GM12878 (cell line): ENCODE measurements at regions of chr19 and their contacts with region 1.

Region 1: GRCh38 chr19:10388957-10389356 is 8.6 kb upstream of the TYK2 start:
- DNase-seq: peak; percentile 69
- ATAC-seq: peak; percentile 53
- H3K4me3 ChIP-seq: no peak overlapping the region
- H3K27ac ChIP-seq: no peak overlapping the region
- H3K4me1 ChIP-seq: peaks cover 10% of the 10 kb centered on the region
- H3K27me3 ChIP-seq: no peaks in the 10 kb centered on the region
- CTCF ChIP-seq: peak; percentile 88 to 95 (median 92)
- EP300 ChIP-seq: no peak
- POLR2A ChIP-seq: peak; percentile 46; the same call in 1 of the 2 replicates
- RAD21 ChIP-seq: peak; percentile 84

Region 2: GRCh38 chr19:10259162-10259905 is 129.6 kb before region 1 on chr19:
- CTCF ChIA-PET with region 1: interaction called, 370 read pairs
- POLR2A ChIA-PET with region 1: interaction called, 24 read pairs
- RAD21 ChIA-PET with region 1: interaction called, 107 read pairs
- SMC1A ChIA-PET with region 1: interaction called, 83 read pairs
- in situ Hi-C with region 1: no loop called
- intact Hi-C with region 1: loop called (anchors 1 kb)
- DNase-seq: no peak
- ATAC-seq: peak; percentile 91
- H3K4me3 ChIP-seq: no peak overlapping the region
- H3K27ac ChIP-seq: 0 out of 2 replicates have a peak overlapping the region, but pooled peaks have one; percentile 27
- H3K4me1 ChIP-seq: peaks cover 11% of the 10 kb centered on the region
- H3K27me3 ChIP-seq: no peaks in the 10 kb centered on the region
- CTCF ChIP-seq: peak; percentile 71 to 75 (median 73)
- EP300 ChIP-seq: no peak
- POLR2A ChIP-seq: peak; percentile 72
- RAD21 ChIP-seq: peak; percentile 74

Region 3: GRCh38 chr19:10274589-10274988 is 114.4 kb before region 1 on chr19:
- CTCF ChIA-PET with region 1: interaction called, 370 read pairs
- POLR2A ChIA-PET with region 1: interaction called, 108 read pairs
- RAD21 ChIA-PET with region 1: interaction called, 206 read pairs
- SMC1A ChIA-PET with region 1: interaction called, 158 read pairs
- in situ Hi-C with region 1: loop called (anchors 5 kb)
- intact Hi-C with region 1: loop called (anchors 1 kb)
- DNase-seq: no peak
- ATAC-seq: no peak
- H3K4me3 ChIP-seq: peak overlapping the region; percentile 57
- H3K27ac ChIP-seq: 0 out of 2 replicates have a peak overlapping the region, but pooled peaks have one; percentile 4
- H3K4me1 ChIP-seq: no peaks in the 10 kb centered on the region; the same call in 1 of the 2 replicates
- H3K27me3 ChIP-seq: no peaks in the 10 kb centered on the region
- CTCF ChIP-seq: no peak
- EP300 ChIP-seq: no peak
- POLR2A ChIP-seq: no peak
- RAD21 ChIP-seq: no peak

Region 4: GRCh38 chr19:10279737-10280442 is 109.1 kb before region 1 on chr19:
- CTCF ChIA-PET with region 1: interaction called, 370 read pairs
- POLR2A ChIA-PET with region 1: interaction called, 3 read pairs
- RAD21 ChIA-PET with region 1: interaction called, 4 read pairs
- SMC1A ChIA-PET with region 1: interaction called, 15 read pairs
- in situ Hi-C with region 1: no loop called
- intact Hi-C with region 1: no loop called
- DNase-seq: no peak
- ATAC-seq: peak; percentile 30
- H3K4me3 ChIP-seq: peak overlapping the region; percentile 47; the same call in 1 of the 2 replicates
- H3K27ac ChIP-seq: no peak overlapping the region
- H3K4me1 ChIP-seq: peaks cover 11% of the 10 kb centered on the region
- H3K27me3 ChIP-seq: no peaks in the 10 kb centered on the region
- CTCF ChIP-seq: no peak
- EP300 ChIP-seq: no peak
- POLR2A ChIP-seq: peak; percentile 32; the same call in 1 of the 2 replicates
- RAD21 ChIP-seq: no peak

Region 5: DNA sequence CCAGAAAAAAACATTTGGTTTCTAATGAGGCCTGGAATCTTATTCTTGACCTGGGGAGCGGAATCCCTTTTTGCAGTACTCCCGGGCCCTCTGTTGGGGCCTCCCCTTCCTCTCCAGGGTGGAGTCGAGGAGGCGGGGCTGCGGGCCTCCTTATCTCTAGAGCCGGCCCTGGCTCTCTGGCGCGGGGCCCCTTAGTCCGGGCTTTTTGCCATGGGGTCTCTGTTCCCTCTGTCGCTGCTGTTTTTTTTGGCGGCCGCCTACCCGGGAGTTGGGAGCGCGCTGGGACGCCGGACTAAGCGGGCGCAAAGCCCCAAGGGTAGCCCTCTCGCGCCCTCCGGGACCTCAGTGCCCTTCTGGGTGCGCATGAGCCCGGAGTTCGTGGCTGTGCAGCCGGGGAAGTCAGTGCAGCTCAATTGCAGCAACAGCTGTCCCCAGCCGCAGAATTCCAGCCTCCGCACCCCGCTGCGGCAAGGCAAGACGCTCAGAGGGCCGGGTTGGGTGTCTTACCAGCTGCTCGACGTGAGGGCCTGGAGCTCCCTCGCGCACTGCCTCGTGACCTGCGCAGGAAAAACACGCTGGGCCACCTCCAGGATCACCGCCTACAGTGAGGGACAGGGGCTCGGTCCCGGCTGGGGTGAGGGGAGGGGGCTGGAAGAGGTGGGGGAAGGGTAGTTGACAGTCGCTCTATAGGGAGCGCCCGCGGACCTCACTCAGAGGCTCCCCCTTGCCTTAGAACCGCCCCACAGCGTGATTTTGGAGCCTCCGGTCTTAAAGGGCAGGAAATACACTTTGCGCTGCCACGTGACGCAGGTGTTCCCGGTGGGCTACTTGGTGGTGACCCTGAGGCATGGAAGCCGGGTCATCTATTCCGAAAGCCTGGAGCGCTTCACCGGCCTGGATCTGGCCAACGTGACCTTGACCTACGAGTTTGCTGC is 101.9 kb before region 1 on chr19 and contains the start of gene ICAM4:
- CTCF ChIA-PET with region 1: interaction called, 72 read pairs
- POLR2A ChIA-PET with region 1: interaction called, 4 read pairs
- RAD21 ChIA-PET with region 1: interaction called, 24 read pairs
- SMC1A ChIA-PET with region 1: interaction called, 16 read pairs
- in situ Hi-C with region 1: no loop called
- intact Hi-C with region 1: no loop called
- DNase-seq: no peak
- ATAC-seq: peak; percentile 54
- H3K4me3 ChIP-seq: no peak within 1 kb of the TSS; the same call in 1 of the 2 replicates
- H3K27ac ChIP-seq: peak within 1 kb of the TSS; percentile 10
- H3K4me1 ChIP-seq: peaks cover 68% of the 10 kb centered on the region
- H3K27me3 ChIP-seq: peaks cover 1 to 8% of the 10 kb centered on the region in 2 experiments
- CTCF ChIP-seq: no peak
- EP300 ChIP-seq: no peak
- POLR2A ChIP-seq: peak; percentile 80
- RAD21 ChIP-seq: no peak
- polyA plus RNA-seq, gene ICAM4: 0.69 to 0.72 TPM

Region 6: DNA sequence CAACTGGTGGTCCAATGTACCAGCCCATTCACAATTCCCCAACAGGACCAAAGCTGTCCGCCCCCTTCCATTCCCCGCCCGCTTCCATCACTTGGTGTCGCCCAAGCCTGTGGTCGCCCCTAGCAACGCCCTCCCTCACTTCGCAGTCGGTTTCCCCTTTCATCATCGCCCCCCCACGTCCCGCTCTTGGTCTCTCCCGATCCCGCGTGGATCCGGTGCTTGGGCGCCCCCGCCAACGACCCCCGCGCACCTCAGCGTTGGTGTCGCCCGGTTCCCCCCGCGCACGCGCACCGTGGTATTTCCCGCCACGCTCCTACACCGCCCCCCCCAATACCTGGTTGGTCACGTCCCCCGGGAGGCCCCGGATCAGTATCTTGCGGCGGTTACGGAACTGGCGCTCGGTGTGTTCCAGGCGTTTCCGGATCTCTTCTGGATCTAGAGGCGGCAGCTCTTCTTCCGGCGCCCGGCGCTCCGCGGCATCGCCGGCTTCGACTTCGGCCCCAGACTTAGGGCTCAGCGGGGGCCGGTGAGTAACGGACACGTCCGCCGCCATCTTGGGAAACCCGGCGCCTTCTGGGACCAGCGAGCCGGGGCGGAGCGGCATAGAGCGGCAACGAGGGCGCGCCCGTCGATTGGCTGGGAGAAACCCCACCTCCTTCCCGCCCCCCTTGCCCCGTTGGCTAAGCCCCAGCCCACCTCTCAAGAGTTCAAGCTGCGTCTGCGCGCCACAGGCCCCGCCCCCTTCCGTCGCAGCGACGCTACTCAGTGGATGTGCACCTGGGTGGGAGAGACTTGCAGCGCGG is 55.8 kb before region 1 on chr19 and contains the start of gene RAVER1:
- CTCF ChIA-PET with region 1: interaction called, 15 read pairs
- POLR2A ChIA-PET with region 1: no interaction called
- RAD21 ChIA-PET with region 1: interaction called, 9 read pairs
- SMC1A ChIA-PET with region 1: interaction called, 11 read pairs
- in situ Hi-C with region 1: no loop called
- intact Hi-C with region 1: loop called (anchors 5 kb)
- DNase-seq: peak; percentile 87
- ATAC-seq: peak; percentile 98
- H3K4me3 ChIP-seq: peak within 1 kb of the TSS; percentile 100
- H3K27ac ChIP-seq: peak within 1 kb of the TSS; percentile 92
- H3K4me1 ChIP-seq: peaks cover 16% of the 10 kb centered on the region
- H3K27me3 ChIP-seq: no peaks in the 10 kb centered on the region
- CTCF ChIP-seq: no peak
- EP300 ChIP-seq: peak; percentile 10 to 28; a peak in 1 of 4 replicates
- POLR2A ChIP-seq: peak; percentile 96
- RAD21 ChIP-seq: no peak
- polyA plus RNA-seq, gene RAVER1: 0.03 to 0.05 TPM

Region 7: DNA sequence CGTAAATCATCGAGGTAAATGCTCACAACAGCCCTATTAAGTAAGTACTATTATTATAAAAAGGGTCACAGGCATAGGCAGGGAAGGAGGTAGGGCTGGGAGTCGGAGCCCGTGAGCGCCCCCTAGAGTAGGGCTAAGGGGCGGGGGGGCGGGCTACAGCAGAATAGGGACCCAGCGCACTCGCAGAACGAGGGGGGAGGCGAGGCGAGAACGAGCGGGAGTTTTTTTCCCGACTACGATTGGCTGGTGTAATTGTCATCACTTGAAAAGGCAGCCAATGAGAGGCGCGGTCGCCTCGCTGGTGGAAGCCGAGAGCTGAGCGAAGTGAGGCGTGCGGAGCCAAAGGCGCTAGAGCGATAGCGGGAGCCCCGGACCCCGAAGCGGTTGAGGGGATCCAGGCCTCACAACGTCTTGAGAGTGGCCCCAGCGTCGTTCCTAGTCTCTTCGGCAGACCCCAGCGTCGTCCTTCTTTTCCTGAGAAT is 90.0 kb after region 1 on chr19:
- CTCF ChIA-PET with region 1: no interaction called
- POLR2A ChIA-PET with region 1: no interaction called
- RAD21 ChIA-PET with region 1: no interaction called
- SMC1A ChIA-PET with region 1: no interaction called
- in situ Hi-C with region 1: no loop called
- intact Hi-C with region 1: no loop called
- DNase-seq: no peak
- ATAC-seq: peak; percentile 70
- H3K4me3 ChIP-seq: no peak overlapping the region
- H3K27ac ChIP-seq: no peak overlapping the region
- H3K4me1 ChIP-seq: no peaks in the 10 kb centered on the region
- H3K27me3 ChIP-seq: no peaks in the 10 kb centered on the region; a peak in 1 of 4 replicates
- CTCF ChIP-seq: peak; percentile 16 to 56 (median 27); a peak in 5 of 6 replicates
- EP300 ChIP-seq: no peak
- POLR2A ChIP-seq: no peak
- RAD21 ChIP-seq: peak; percentile 10; the same call in 1 of the 2 replicates

Region 8: GRCh38 chr19:10612491-10613119 is 223.6 kb after region 1 on chr19:
- CTCF ChIA-PET with region 1: no interaction called
- POLR2A ChIA-PET with region 1: no interaction called
- RAD21 ChIA-PET with region 1: no interaction called
- SMC1A ChIA-PET with region 1: no interaction called
- in situ Hi-C with region 1: no loop called
- intact Hi-C with region 1: no loop called
- DNase-seq: no peak
- ATAC-seq: no peak
- H3K4me3 ChIP-seq: no peak overlapping the region
- H3K27ac ChIP-seq: no peak overlapping the region
- H3K4me1 ChIP-seq: no peaks in the 10 kb centered on the region
- H3K27me3 ChIP-seq: no peaks in the 10 kb centered on the region
- CTCF ChIP-seq: no peak
- EP300 ChIP-seq: no peak
- POLR2A ChIP-seq: no peak
- RAD21 ChIP-seq: no peak

Region 9: DNA sequence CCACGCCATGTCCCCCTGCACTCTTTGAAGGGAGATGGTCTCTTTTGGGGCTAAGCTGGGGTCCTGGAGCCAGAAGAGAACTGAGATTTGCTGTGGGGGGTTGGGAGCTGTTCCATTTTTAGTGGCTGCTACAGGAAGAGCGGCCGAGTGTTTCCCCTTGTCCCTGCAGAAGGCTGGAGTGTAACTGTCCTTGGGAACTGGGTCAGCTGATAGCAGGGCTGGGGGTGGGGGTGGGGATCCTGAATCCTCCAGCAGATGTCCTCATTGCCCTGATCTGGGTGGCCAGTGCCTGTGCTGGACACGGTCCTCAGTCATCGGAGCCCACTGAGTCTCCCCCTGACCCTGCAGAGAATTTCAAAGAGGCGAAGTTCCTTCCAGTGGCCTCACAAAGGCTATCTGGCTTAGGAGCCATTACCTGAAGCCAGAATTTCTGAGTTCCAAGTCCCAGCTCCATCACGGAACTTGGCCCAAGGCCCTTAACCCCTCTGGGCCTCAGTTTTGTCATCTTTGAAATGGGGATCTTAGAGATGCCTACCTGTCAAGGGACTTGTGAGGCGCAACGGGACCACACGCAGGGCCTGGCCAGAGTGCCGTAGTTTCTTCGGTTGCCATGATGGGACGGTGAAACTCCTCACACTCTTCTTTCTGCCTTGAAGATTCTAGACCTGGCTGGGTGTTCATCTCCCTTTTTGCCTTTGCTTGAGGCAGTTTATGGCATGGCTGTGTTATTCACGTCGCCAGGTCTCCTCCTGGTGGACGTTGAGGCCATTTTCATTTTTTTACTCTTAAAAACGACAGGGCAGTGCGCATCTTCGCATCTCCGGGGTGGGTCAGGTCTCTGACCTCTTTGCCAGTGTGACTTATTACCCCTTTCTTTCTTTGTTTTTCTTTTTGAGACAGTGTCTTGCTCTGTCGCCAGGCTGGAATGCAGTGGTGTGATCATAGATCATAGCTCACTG is 380.9 kb after region 1 on chr19:
- CTCF ChIA-PET with region 1: no interaction called
- POLR2A ChIA-PET with region 1: no interaction called
- RAD21 ChIA-PET with region 1: no interaction called
- SMC1A ChIA-PET with region 1: no interaction called
- in situ Hi-C with region 1: no loop called
- intact Hi-C with region 1: no loop called
- DNase-seq: no peak
- ATAC-seq: no peak
- H3K4me3 ChIP-seq: no peak overlapping the region
- H3K27ac ChIP-seq: no peak overlapping the region
- H3K4me1 ChIP-seq: peaks cover 5% of the 10 kb centered on the region
- H3K27me3 ChIP-seq: no peaks in the 10 kb centered on the region
- CTCF ChIP-seq: peak in 1 of 3 experiments; percentile 10; a peak in 1 of 6 replicates
- EP300 ChIP-seq: no peak
- POLR2A ChIP-seq: no peak
- RAD21 ChIP-seq: peak; percentile 15; the same call in 1 of the 2 replicates